Ascending aorta (tissue), 2 donors: ENCODE measurements at regions of chr5 and their contacts with region 1.

Region 1: DNA sequence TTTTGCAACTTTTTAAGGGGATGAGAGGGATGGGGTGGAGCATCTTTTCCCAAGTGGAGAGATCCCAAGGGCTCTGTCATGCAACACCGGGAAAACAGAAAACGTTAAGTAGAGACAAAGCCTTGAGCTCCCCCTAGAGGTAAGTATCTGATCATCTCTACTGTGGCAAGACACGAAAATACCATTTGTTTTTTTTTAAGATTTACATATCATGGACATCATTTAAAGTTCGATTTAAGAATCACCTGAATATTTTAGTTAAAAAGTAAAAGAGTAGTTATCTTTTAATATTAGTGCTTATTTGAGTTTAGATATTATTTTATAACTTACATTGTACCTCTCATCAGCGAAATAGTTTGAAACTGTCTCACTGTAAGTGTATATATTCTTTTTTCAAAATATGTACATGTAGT is 200.4 kb downstream of the LRRC70 start:
- DNase-seq: no peak
- H3K4me3 ChIP-seq: no peak overlapping the region
- H3K27ac ChIP-seq: no peak overlapping the region
- H3K4me1 ChIP-seq: no peaks in the 10 kb centered on the region
- H3K27me3 ChIP-seq: no peaks in the 10 kb centered on the region
- CTCF ChIP-seq: peak; percentile 16 to 70 (median 39)

Region 2: DNA sequence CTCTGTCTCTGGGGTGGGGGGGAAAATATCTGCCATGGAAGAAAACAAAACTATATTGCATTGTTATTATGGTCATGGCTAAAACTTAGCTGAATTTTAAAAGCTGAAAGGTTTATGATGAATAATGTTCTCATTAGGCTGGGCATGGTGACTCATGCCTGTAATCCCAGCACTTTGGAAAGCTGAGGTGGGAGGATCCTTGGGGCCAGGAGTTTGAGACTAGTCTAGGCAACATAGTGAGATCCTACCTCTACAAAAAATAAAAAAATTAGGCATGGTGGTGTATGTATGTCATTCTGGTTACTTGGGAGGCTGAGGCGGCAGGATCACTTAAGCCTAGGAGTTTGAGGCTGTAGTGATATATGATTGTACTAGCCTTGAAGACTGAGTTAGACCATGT is 321.9 kb before region 1 on chr5:
- intact Hi-C with region 1: loop called (anchors 5 kb)
- DNase-seq: no peak
- H3K4me3 ChIP-seq: no peak overlapping the region
- H3K27ac ChIP-seq: no peak overlapping the region
- H3K4me1 ChIP-seq: no peaks in the 10 kb centered on the region
- H3K27me3 ChIP-seq: no peaks in the 10 kb centered on the region
- CTCF ChIP-seq: no peak

Region 3: GRCh38 chr5:62896121-62896893 is 117.3 kb after region 1 on chr5:
- intact Hi-C with region 1: no loop called
- DNase-seq: no peak
- H3K4me3 ChIP-seq: no peak overlapping the region
- H3K27ac ChIP-seq: no peak overlapping the region
- H3K4me1 ChIP-seq: no peaks in the 10 kb centered on the region
- H3K27me3 ChIP-seq: no peaks in the 10 kb centered on the region
- CTCF ChIP-seq: no peak